Mammary epithelial cell (primary cell): ENCODE measurements at regions of chr13 and their contacts with region 1.

Region 1: GRCh38 chr13:52450012-52450792 is at the start of gene VPS36:
- DNase-seq: peak; percentile 94
- H3K4me3 ChIP-seq: peak within 1 kb of the TSS; percentile 72 to 85 (median 73)
- H3K27ac ChIP-seq: peak within 1 kb of the TSS; percentile 79
- H3K4me1 ChIP-seq: peaks cover 42% of the 10 kb centered on the region
- H3K27me3 ChIP-seq: no peaks in the 10 kb centered on the region
- CTCF ChIP-seq: peak; percentile 85 to 97
- total RNA-seq, gene VPS36: 40.5 to 48.7 TPM

Region 2: DNA sequence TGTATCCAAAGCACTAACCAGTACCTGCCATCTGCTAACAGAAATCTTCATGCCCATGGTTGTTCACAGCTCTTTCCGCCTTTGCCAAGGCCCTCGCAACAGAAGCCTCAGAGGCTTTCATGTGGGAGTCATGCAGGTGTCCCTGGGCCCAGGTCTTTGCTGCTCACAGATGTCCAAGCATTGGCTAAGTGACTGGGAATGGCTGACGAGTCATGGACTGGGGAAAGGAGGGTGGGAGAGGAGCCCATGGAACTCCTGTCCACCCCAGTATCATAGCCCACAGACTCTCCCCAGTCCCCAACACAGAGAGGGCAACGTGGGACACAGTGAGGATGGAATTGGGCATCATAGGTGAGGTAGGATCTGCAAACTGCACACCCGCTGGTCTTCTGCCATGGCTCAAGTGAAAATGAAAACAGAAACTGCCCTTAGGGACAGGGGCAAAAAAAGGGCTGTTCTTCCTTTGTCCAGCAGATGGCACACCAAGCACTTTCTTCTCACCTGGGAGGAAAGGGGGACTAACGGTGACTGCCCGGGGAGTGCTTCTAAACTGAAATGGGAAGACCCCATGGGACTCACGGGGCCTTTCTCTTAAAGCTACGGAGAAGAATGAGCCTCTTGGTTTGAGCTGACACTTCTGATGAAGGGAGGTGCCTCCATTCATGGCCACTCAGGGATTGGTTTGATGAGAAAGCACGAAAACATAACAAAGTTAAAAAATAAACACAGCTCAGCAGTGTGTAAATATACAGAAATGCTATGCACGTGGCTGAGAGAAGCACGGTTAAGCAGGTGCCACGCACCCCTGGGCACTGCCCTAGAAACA is 635.2 kb before region 1 on chr13:
- CTCF ChIA-PET with region 1: no interaction called
- dilution Hi-C with region 1: no loop called
- in situ Hi-C with region 1: no loop called
- intact Hi-C with region 1: loop called (anchors 10 kb)
- DNase-seq: peak; percentile 67
- H3K4me3 ChIP-seq: peak overlapping the region in 2 of 3 experiments; percentile 22 to 34
- H3K27ac ChIP-seq: no peak overlapping the region
- H3K4me1 ChIP-seq: peaks cover 4% of the 10 kb centered on the region
- H3K27me3 ChIP-seq: no peaks in the 10 kb centered on the region
- CTCF ChIP-seq: peak; percentile 85 to 86

Region 3: DNA sequence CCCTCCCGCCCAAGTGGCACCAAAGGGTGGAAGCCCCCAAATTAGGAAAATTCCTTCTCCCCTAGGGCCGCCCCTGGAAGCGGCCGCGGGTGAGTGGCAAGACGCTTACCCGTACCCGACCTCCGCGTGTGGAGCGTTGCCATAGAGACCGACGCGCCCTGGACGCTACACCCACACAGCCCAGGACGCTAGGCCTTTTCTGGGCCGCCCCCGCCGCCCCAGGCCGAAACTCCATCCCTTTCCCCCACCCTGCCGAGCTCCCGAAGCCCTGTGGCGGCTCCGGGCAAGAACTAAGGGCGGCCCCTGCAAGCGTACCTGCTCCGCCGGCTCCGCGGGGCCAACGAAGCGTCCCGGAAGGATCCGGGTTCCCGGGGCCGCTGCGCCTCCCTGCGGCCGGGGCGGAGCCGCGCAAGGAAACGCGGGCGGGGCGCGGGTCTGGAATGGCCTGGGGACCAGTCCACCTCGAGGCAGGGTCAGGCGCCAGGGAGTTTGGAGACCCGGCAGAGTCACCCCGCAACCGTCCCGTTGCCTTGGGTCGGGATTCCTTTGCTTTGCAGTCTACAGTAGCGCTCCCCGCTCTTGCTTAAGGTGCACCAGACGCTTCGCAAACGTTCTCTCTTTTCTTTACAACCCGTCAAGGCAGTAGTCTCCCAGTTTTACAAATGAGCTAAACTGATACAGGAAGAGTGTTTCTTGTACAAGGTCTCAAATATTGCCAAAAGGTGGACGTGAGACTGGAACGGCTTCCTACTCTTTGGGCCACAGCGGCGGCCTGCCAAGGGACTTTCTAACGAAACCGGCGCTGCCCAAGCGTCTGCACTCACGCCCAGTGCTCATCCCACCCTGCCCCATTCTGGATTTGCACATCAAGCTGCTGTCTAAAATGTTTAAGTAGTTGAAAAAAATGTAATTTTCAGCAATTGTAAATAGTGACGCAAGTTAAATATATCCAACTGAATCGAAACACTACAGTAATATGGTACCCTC is 321.2 kb before region 1 on chr13 and contains the start of gene NEK5:
- CTCF ChIA-PET with region 1: no interaction called
- dilution Hi-C with region 1: no loop called
- in situ Hi-C with region 1: no loop called
- intact Hi-C with region 1: loop called (anchors 5 kb)
- DNase-seq: peak; percentile 57
- H3K4me3 ChIP-seq: peak within 1 kb of the TSS; percentile 54 to 79 (median 62)
- H3K27ac ChIP-seq: no peak within 1 kb of the TSS
- H3K4me1 ChIP-seq: peaks cover 21% of the 10 kb centered on the region
- H3K27me3 ChIP-seq: no peaks in the 10 kb centered on the region
- CTCF ChIP-seq: peak; percentile 26 to 87
- total RNA-seq, gene NEK5: 0.26 to 0.33 TPM

Region 4: GRCh38 chr13:52194184-52194868 is 255.9 kb before region 1 on chr13:
- CTCF ChIA-PET with region 1: no interaction called
- dilution Hi-C with region 1: no loop called
- in situ Hi-C with region 1: loop called in 1 of 2 experiments (anchors 25 kb)
- intact Hi-C with region 1: no loop called
- DNase-seq: peak; percentile 83
- H3K4me3 ChIP-seq: peak overlapping the region; percentile 70 to 81 (median 75)
- H3K27ac ChIP-seq: peak overlapping the region; percentile 54
- H3K4me1 ChIP-seq: peaks cover 12% of the 10 kb centered on the region
- H3K27me3 ChIP-seq: no peaks in the 10 kb centered on the region
- CTCF ChIP-seq: no peak

Region 5: DNA sequence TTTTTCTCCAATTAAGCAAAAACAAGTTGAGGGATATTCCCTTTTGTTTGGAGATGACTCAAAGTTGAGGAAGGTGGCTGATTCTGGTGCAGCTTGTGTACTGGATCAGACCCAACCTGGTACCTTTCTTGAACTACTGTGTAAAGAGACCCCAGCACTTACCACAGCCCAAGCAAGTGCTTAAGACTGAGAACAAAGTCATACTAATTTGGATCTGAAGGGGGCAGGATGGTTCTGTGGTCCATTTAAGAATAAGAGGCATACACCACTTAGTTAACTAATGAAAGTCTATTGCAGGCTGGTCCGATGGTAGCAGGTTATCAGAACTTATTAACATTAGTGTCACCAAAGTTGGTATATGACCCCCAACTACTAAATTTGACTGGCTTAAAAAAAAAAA is 50.5 kb before region 1 on chr13:
- CTCF ChIA-PET with region 1: interaction called, 3 read pairs
- dilution Hi-C with region 1: no loop called
- in situ Hi-C with region 1: no loop called
- intact Hi-C with region 1: loop called (anchors 1 kb)
- DNase-seq: no peak
- H3K4me3 ChIP-seq: no peak overlapping the region
- H3K27ac ChIP-seq: no peak overlapping the region
- H3K4me1 ChIP-seq: peaks cover 9% of the 10 kb centered on the region
- H3K27me3 ChIP-seq: no peaks in the 10 kb centered on the region
- CTCF ChIP-seq: peak; percentile 16 to 41

Region 6: DNA sequence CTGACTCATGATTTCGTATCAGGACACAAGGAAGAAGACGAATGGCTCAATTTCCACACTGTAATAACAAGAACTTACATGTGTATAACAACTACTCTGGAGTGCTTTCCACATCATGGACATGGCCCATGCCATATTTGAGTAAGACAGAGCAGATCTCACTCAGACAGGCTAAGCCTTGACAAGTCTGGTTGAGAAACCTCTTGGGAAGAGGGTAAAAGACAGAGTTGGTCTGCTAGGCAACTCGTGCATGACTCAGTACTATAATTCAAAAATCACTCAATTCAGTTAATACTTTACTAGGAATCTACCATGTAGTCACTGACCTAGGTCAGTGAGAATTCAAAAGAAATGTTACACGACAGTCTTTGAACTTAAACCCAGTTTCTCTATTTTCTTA is 38.6 kb before region 1 on chr13:
- CTCF ChIA-PET with region 1: interaction called, 5 read pairs
- dilution Hi-C with region 1: no loop called
- in situ Hi-C with region 1: loop called in 1 of 2 experiments (anchors 5 kb)
- intact Hi-C with region 1: no loop called
- DNase-seq: peak; percentile 98
- H3K4me3 ChIP-seq: no peak overlapping the region
- H3K27ac ChIP-seq: peak overlapping the region; percentile 87
- H3K4me1 ChIP-seq: peaks cover 44% of the 10 kb centered on the region
- H3K27me3 ChIP-seq: no peaks in the 10 kb centered on the region
- CTCF ChIP-seq: no peak